CD8-positive, alpha-beta T cell (primary cell): ENCODE measurements at regions of chr4 and their contacts with region 1.

Region 1: DNA sequence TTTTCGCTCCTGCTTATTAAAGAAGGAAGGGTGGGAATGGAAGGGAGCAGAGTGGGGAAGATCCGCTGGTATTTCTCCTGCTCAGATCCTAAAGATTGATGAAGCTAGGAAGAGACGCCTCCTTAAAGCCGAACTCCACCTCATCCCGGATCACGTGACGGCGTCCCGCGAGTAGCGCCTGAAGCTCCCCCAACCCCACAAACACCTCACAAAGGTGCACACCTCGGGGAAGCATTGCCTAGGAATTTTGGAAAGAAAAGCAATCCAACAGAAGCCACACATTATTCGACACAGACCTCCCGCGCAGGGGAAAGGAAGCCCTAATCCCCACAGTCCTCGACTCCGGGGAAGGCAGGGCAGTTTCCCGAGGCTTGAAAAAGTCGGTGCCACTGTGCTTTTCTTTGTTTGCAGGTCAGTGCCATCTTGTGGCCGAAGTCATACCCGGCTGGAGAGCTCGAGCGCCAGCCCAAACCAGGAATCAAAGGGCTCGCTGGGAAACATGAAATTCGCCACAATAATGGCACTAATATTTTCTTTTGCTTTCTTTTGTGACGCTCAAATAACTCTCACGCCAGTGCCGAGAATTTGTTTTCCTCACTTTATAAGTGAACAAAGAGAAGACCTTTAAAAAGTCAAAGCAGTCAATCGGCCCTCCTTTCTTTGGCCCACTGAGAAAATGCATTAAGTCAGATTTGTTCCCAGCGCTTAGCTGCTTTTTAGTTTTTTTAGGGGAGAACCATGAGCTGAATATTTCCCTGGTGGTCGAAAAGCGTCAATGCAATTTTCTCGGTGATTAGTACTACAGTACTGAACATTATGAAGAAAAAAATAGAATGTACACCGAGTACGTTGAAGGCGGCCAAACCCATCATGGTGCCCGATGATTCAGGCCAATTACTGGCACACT is at the start of gene NPY1R:
- DNase-seq: peak in 2 of 9 experiments; percentile 6 to 13
- ATAC-seq: no peak
- H3K4me3 ChIP-seq: peak within 1 kb of the TSS in 1 of 2 experiments; percentile 30
- H3K4me3 Mint-ChIP-seq: peak within 1 kb of the TSS; percentile 38
- H3K27ac ChIP-seq: no peak within 1 kb of the TSS
- H3K27ac Mint-ChIP-seq: no peak within 1 kb of the TSS
- H3K4me1 ChIP-seq: peaks cover 10% of the 10 kb centered on the region
- H3K4me1 Mint-ChIP-seq: peaks cover 15% of the 10 kb centered on the region
- H3K27me3 ChIP-seq: peaks cover 4 to 5% of the 10 kb centered on the region in 2 experiments
- H3K27me3 Mint-ChIP-seq: peaks cover 42% of the 10 kb centered on the region
- CTCF ChIP-seq: no peak
- total RNA-seq, gene NPY1R: not detected

Region 2: GRCh38 chr4:162497564-162498167 is 835.1 kb before region 1 on chr4:
- CTCF ChIA-PET with region 1: no interaction called
- POLR2A ChIA-PET with region 1: no interaction called
- intact Hi-C with region 1: loop called (anchors 2 to 5 kb)
- DNase-seq: peak in 2 of 9 experiments; percentile 26 to 44
- ATAC-seq: no peak
- H3K4me3 ChIP-seq: no peak overlapping the region
- H3K4me3 Mint-ChIP-seq: no peak overlapping the region
- H3K27ac ChIP-seq: no peak overlapping the region
- H3K27ac Mint-ChIP-seq: no peak overlapping the region
- H3K4me1 ChIP-seq: no peaks in the 10 kb centered on the region
- H3K4me1 Mint-ChIP-seq: no peaks in the 10 kb centered on the region
- H3K27me3 ChIP-seq: no peaks in the 10 kb centered on the region
- H3K27me3 Mint-ChIP-seq: peaks cover 2% of the 10 kb centered on the region
- CTCF ChIP-seq: peak; percentile 61

Region 3: GRCh38 chr4:163295138-163295537 is 37.6 kb before region 1 on chr4:
- CTCF ChIA-PET with region 1: no interaction called
- POLR2A ChIA-PET with region 1: no interaction called
- intact Hi-C with region 1: no loop called
- DNase-seq: no peak
- ATAC-seq: no peak
- H3K4me3 ChIP-seq: no peak overlapping the region
- H3K4me3 Mint-ChIP-seq: no peak overlapping the region
- H3K27ac ChIP-seq: no peak overlapping the region
- H3K27ac Mint-ChIP-seq: no peak overlapping the region
- H3K4me1 ChIP-seq: no peaks in the 10 kb centered on the region
- H3K4me1 Mint-ChIP-seq: no peaks in the 10 kb centered on the region
- H3K27me3 ChIP-seq: no peaks in the 10 kb centered on the region
- H3K27me3 Mint-ChIP-seq: peaks cover 2% of the 10 kb centered on the region
- CTCF ChIP-seq: no peak

Region 4: GRCh38 chr4:163344147-163345125 is 11.7 kb after region 1 on chr4:
- CTCF ChIA-PET with region 1: no interaction called
- POLR2A ChIA-PET with region 1: no interaction called
- intact Hi-C with region 1: no loop called
- DNase-seq: no peak
- ATAC-seq: no peak
- H3K4me3 ChIP-seq: no peak overlapping the region
- H3K4me3 Mint-ChIP-seq: no peak overlapping the region
- H3K27ac ChIP-seq: no peak overlapping the region
- H3K27ac Mint-ChIP-seq: no peak overlapping the region
- H3K4me1 ChIP-seq: no peaks in the 10 kb centered on the region
- H3K4me1 Mint-ChIP-seq: peaks cover 5% of the 10 kb centered on the region
- H3K27me3 ChIP-seq: peaks cover 0 to 5% of the 10 kb centered on the region in 2 experiments
- H3K27me3 Mint-ChIP-seq: peaks cover 35% of the 10 kb centered on the region
- CTCF ChIP-seq: no peak

Region 5: DNA sequence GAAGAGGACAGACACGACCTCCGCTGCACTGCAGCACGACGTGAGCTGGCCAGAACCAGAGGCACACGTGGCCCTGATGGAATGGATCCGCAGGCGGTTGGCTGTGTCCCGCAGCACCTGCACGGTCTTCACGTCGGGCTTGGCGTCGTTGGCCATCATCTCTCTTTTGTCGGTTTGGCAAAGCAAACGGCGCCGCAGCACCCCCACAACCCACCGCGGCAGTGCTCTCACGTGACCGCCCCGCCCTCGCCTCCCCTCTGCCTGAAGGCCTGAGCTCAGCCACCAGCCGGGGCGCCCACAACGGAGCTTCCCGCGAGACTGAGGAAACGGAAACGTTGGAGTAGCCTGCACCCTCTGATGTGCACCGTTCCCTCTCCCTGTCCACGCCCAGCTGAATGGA is 140.8 kb after region 1 on chr4 and contains the start of gene TKTL2:
- CTCF ChIA-PET with region 1: no interaction called
- POLR2A ChIA-PET with region 1: no interaction called
- intact Hi-C with region 1: no loop called
- DNase-seq: no peak
- ATAC-seq: no peak
- H3K4me3 ChIP-seq: no peak within 1 kb of the TSS
- H3K4me3 Mint-ChIP-seq: no peak within 1 kb of the TSS
- H3K27ac ChIP-seq: no peak within 1 kb of the TSS
- H3K27ac Mint-ChIP-seq: no peak within 1 kb of the TSS
- H3K4me1 ChIP-seq: no peaks in the 10 kb centered on the region
- H3K4me1 Mint-ChIP-seq: no peaks in the 10 kb centered on the region
- H3K27me3 ChIP-seq: no peaks in the 10 kb centered on the region
- H3K27me3 Mint-ChIP-seq: peaks cover 5% of the 10 kb centered on the region
- CTCF ChIP-seq: no peak
- total RNA-seq, gene TKTL2: not detected

Region 6: DNA sequence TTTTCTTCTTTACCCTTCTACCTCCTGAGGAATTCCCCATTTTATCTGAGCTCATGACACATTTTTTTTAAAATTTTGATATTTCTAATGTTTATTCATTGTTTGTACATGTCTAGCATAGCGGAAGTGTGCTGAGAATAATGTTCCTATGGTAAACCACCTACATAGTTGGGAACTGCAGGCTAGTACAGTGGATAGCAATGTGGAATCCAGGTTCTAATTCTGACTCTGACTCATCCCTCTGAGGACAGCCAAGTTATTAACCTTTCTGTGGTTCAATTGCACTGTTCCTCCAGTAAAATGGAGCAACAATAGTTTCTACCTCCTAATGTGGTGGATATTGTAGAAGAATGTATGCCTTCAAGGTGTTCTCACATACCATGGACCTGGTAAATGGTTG is 1523.6 kb after region 1 on chr4:
- CTCF ChIA-PET with region 1: no interaction called
- POLR2A ChIA-PET with region 1: no interaction called
- intact Hi-C with region 1: no loop called
- DNase-seq: no peak
- ATAC-seq: no peak
- H3K4me3 ChIP-seq: no peak overlapping the region
- H3K4me3 Mint-ChIP-seq: no peak overlapping the region
- H3K27ac ChIP-seq: no peak overlapping the region
- H3K27ac Mint-ChIP-seq: no peak overlapping the region
- H3K4me1 ChIP-seq: no peaks in the 10 kb centered on the region
- H3K4me1 Mint-ChIP-seq: no peaks in the 10 kb centered on the region
- H3K27me3 ChIP-seq: no peaks in the 10 kb centered on the region
- H3K27me3 Mint-ChIP-seq: peaks cover 6% of the 10 kb centered on the region
- CTCF ChIP-seq: no peak